Activated CD8-positive, alpha-beta memory T cell treated with anti-CD3 and anti-CD28 coated beads, Interleukin-2, amount 10 ng/mL, durations not matched to agents 7 days and 5 days (primary cell): ENCODE measurements at regions of chr12 and their contacts with region 1.

Region 1: DNA sequence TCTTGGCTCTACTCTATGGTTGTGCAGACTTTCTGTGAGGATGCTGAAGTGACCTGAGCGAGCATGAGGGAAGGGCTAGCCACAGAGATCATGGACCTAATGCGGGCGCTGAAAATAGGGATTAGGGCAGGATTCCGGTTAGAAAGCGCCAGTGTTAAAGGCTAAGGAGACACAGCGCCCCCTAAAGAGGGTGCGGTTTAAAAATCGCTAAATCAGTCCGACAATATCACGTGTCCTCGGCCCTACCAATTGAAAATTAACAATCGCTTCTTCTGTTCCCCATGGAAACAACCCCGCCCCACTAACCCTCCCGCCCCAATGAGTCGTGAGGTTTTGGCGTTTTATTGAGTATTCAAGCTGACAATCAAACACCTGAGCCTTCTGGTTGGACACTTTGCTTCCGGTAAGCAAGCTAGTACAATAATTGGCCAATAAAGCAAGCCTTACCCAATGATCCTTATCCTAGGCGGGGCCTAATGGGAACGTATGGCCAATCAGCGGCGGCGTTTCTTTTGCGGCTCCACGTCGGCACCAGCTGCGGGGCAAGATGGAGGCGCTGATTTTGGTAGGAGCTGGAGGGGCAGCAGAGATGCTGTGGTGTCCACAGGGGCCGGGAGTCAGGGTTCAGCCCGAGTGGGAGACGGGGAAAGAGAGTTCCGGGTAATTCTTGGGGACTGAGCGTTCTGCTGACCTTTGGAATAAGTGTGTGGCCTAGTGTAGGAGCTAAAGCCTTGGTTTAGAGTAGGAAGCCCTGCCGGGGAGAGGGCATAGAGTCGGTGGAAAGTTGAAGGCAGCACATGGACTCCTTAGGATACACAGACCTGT is at the start of gene COPZ1:
- DNase-seq: peak; percentile 99
- ATAC-seq: peak; percentile 99
- H3K4me3 Mint-ChIP-seq: peak within 1 kb of the TSS; percentile 93
- H3K27ac Mint-ChIP-seq: peak within 1 kb of the TSS; percentile 91
- H3K4me1 Mint-ChIP-seq: peaks cover 31% of the 10 kb centered on the region
- H3K27me3 Mint-ChIP-seq: no peaks in the 10 kb centered on the region
- total RNA-seq, gene COPZ1: 90.8 to 104 TPM

Region 2: DNA sequence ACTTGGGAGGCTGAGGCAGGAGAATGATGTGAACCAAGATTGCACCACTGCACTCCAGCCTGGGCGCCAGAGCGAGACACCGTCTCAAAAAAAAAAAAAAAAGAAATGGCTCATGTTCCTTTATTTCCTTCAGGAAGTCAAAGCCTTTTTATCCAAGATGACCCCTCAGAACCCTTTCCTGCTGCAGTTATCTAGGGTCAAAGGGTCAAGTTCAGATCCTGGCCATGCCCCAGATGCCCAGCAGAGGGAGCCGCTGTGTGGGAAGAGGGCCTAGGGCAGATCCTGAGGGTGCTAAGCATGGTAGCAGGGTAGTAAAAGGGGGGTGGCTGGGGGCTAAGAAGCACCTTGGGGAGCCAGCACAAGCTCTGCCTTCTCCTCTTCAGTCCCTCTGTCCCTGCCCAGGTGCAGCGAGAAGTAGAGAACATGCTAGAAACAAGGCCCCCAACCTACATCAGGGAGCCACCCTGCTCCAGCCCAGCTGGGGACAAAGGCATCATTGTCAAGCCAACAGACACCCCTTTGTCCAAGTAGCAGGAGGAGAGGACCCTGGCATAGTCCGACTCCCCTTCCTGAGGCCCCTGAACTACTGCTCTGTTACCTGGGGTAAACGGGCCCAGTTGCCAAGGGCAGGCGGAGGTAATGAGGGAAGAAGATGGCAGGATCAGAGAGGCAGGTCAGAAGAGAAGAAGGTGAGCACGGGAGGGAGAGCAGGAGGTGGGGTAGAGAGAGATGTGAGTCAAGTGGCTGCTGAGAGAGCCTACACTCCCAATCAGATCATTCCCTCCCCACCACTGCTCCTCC is 30.5 kb before region 1 on chr12:
- CTCF ChIA-PET with region 1: interaction called, 12 read pairs
- DNase-seq: peak; percentile 79
- ATAC-seq: peak; percentile 66
- H3K4me3 Mint-ChIP-seq: no peak overlapping the region
- H3K27ac Mint-ChIP-seq: no peak overlapping the region
- H3K4me1 Mint-ChIP-seq: peaks cover 2% of the 10 kb centered on the region
- H3K27me3 Mint-ChIP-seq: peaks cover 24% of the 10 kb centered on the region

Region 3: GRCh38 chr12:54304187-54304810 is 20.5 kb before region 1 on chr12:
- CTCF ChIA-PET with region 1: interaction called, 16 read pairs
- DNase-seq: peak; percentile 45
- ATAC-seq: peak; percentile 16
- H3K4me3 Mint-ChIP-seq: no peak overlapping the region
- H3K27ac Mint-ChIP-seq: no peak overlapping the region
- H3K4me1 Mint-ChIP-seq: peaks cover 28% of the 10 kb centered on the region
- H3K27me3 Mint-ChIP-seq: peaks cover 64% of the 10 kb centered on the region

Region 4: GRCh38 chr12:54337280-54337842 is 12.5 kb after region 1 on chr12:
- CTCF ChIA-PET with region 1: interaction called, 53 read pairs
- DNase-seq: no peak
- ATAC-seq: no peak
- H3K4me3 Mint-ChIP-seq: no peak overlapping the region
- H3K27ac Mint-ChIP-seq: no peak overlapping the region
- H3K4me1 Mint-ChIP-seq: peaks cover 3% of the 10 kb centered on the region
- H3K27me3 Mint-ChIP-seq: no peaks in the 10 kb centered on the region

Region 5: DNA sequence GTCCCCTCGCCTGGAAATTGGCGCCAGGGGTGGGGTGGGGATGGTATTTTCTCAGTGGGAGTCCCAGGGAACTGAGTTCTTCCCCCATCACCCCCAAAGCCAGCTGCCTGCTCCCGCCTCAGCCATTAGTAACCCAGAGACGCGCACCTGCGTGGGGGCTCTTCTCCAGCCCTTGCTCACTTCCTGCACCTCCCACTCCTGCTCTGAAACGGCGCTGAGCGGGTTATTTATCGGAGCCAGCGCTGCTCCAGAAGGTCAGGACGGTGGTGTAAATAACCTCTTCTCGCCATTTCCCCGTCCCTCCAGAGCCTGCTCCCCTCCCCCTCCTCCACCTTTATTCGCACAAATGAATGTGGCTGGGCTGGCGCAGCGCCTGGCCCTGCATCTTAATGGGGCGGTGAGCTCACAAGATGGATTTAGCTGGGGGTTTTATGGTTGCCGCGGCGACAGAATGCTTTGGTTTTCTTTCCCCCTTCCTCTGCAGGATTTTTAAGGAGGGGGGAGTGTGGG is 27.2 kb after region 1 on chr12:
- CTCF ChIA-PET with region 1: interaction called, 11 read pairs
- DNase-seq: no peak
- ATAC-seq: no peak
- H3K4me3 Mint-ChIP-seq: no peak overlapping the region
- H3K27ac Mint-ChIP-seq: no peak overlapping the region
- H3K4me1 Mint-ChIP-seq: peaks cover 8% of the 10 kb centered on the region
- H3K27me3 Mint-ChIP-seq: no peaks in the 10 kb centered on the region

Region 6: GRCh38 chr12:54407183-54407905 is 82.5 kb after region 1 on chr12:
- CTCF ChIA-PET with region 1: no interaction called
- DNase-seq: no peak
- ATAC-seq: no peak
- H3K4me3 Mint-ChIP-seq: no peak overlapping the region
- H3K27ac Mint-ChIP-seq: no peak overlapping the region
- H3K4me1 Mint-ChIP-seq: peaks cover 20% of the 10 kb centered on the region
- H3K27me3 Mint-ChIP-seq: no peaks in the 10 kb centered on the region

Region 7: DNA sequence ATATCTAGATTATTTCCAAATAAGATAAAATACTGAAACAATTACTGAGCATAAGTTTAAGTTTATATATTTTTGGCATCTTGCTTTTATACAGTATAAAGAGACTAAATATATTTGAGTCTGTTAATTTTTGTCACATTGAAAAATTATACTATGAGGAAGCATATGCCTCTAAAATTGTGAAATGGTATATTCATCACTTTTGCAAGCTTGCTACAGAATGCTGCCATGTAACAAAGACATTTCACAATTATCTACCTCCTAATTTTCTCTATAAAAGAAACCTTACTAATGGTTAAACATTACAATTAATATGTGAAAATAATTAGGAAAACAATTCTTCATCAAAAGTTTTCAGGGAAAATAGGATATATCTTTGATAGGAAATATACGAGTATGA is 506.8 kb after region 1 on chr12:
- CTCF ChIA-PET with region 1: no interaction called
- DNase-seq: no peak
- ATAC-seq: no peak
- H3K4me3 Mint-ChIP-seq: no peak overlapping the region
- H3K27ac Mint-ChIP-seq: no peak overlapping the region
- H3K4me1 Mint-ChIP-seq: no peaks in the 10 kb centered on the region
- H3K27me3 Mint-ChIP-seq: peaks cover 17% of the 10 kb centered on the region